Activated CD4-positive, alpha-beta T cell treated with anti-CD3 and anti-CD28 coated beads for 36 hours (primary cell): ENCODE measurements at regions of chr11 and their contacts with region 1.

Region 1: DNA sequence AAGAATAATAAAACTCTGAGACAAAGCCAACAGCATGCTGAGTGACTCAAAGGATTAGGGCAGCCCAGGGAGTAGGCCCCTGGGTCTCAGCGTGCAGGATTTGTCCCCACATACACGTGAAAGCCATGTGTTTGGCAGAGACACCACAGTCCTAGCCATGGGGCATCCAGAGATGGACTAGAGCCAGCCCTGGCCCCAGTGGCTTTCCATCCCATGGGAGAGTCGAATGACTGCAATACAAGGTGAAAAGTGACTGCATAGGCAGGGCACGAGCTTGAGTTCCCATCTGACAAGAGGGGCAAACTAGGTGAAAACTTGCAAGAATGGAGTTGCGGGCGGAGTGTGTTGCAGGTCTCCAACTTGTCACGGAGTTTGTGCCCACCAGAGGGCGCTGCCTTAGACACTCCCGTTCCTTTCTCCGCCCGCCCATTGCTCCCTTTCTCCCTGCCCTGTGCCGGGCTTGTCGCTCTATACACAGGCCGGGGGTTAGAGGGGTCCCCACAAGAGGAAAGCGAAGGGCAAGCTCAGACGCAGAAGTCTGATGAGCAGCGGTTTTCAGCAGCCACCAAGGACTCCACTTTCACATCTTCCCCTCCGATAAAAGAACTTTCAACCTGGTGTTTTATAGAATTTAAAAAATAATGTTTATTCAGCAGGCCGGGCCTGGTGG is 24.2 kb downstream of the TSKU start:
- DNase-seq: peak; percentile 91
- ATAC-seq: peak; percentile 21
- H3K4me3 Mint-ChIP-seq: no peak overlapping the region
- H3K27ac Mint-ChIP-seq: no peak overlapping the region
- H3K4me1 Mint-ChIP-seq: peaks cover 31% of the 10 kb centered on the region
- H3K27me3 Mint-ChIP-seq: peaks cover 12% of the 10 kb centered on the region

Region 2: GRCh38 chr11:76307396-76307795 is 499.9 kb before region 1 on chr11:
- CTCF ChIA-PET with region 1: no interaction called
- POLR2A ChIA-PET with region 1: no interaction called
- intact Hi-C with region 1: no loop called
- DNase-seq: no peak
- ATAC-seq: no peak
- H3K4me3 Mint-ChIP-seq: no peak overlapping the region
- H3K27ac Mint-ChIP-seq: no peak overlapping the region
- H3K4me1 Mint-ChIP-seq: no peaks in the 10 kb centered on the region
- H3K27me3 Mint-ChIP-seq: no peaks in the 10 kb centered on the region

Region 3: DNA sequence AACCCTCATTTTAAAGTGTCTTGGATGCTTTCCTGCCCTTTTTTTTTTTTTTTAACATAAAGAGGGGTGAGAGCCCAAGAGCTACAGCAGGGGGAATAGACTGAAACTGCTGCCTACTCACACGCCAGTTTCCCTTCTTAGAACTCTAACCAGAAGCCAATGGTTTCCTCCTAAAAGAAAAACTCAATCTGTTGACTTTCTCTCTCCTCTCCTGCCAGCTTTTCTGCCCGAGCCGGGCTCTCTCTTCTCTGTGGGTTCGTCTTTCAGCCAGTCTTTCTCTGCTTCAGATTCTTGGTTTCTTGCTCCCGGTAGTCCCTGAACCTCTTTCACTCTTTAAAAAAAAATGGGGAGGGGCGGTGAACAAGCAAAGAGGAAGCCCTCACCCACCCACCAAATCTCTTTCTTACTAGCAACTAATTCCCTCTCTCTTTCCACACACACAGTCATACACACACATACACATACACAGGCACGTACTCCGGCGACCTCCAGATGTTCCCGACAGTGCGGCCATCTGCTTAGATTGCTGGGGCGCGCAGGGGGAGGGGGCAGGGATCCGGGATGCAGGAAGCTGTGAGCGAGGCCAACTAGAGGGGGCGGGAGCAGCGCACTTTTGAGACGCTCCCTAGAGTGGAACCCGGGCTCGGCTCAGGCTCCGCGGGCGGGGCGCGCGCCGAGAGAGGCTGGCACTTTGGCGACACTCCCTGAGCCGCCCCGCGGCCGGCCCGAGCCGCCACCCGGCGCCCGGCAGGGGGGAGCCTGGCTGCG is 24.6 kb before region 1 on chr11:
- CTCF ChIA-PET with region 1: interaction called, 5 read pairs
- POLR2A ChIA-PET with region 1: interaction called, 3 read pairs
- intact Hi-C with region 1: loop called in 1 of 2 experiments (anchors 1 kb)
- DNase-seq: peak; percentile 91
- ATAC-seq: peak; percentile 89
- H3K4me3 Mint-ChIP-seq: peak overlapping the region; percentile 69
- H3K27ac Mint-ChIP-seq: peak overlapping the region; percentile 96
- H3K4me1 Mint-ChIP-seq: peaks cover 15% of the 10 kb centered on the region
- H3K27me3 Mint-ChIP-seq: peaks cover 41% of the 10 kb centered on the region

Region 4: DNA sequence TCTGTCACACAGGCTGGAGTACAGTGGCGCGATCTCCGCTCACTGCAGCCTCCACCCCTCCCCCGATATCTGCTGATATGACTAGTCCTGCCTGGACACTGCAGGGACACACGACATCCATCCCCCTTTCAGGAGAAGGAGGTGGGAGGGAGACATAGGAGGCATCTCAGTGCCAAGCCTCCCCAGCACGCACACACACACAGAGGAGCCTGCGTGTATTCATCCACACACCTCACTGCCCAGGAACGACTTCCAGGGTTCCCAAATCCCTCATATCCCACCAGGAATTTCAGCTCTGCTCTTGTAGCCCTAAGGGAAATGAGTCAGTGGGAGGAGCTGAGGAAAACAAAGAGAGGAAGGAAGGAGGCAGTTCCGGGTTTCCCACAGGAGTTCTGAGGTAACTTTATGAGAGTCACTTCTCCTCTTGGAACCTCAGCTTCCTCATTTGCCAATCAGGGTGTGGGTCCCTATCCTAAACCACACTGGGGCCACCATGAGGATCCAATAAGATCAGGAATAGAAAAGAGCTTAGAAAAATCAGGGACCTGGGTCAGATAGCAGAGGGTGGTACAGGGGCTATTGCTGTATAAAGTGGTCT is 16.2 kb after region 1 on chr11:
- CTCF ChIA-PET with region 1: interaction called, 12 read pairs
- POLR2A ChIA-PET with region 1: no interaction called
- intact Hi-C with region 1: no loop called
- DNase-seq: no peak
- ATAC-seq: no peak
- H3K4me3 Mint-ChIP-seq: no peak overlapping the region
- H3K27ac Mint-ChIP-seq: no peak overlapping the region
- H3K4me1 Mint-ChIP-seq: peaks cover 6% of the 10 kb centered on the region
- H3K27me3 Mint-ChIP-seq: peaks cover 7% of the 10 kb centered on the region

Region 5: DNA sequence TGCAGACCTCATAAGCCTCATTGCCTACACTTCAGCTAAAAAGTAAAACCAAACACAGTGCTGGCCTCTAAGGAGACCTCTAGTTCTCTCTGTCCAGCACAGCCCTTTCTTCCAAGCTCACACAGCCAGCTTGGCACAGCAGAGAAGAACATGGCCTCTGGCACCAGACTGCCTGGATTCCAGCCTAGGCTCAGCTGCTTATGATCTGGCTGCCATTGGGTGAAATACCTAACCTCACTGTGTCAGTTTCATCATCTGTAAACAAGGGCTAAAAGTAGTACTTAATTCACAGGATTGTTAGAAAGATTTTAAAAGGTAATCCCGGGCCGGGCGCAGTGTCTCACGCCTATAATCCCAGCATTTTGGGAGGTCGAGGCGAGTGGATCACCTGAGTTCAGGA is 43.5 kb after region 1 on chr11:
- CTCF ChIA-PET with region 1: no interaction called
- POLR2A ChIA-PET with region 1: no interaction called
- intact Hi-C with region 1: no loop called
- DNase-seq: no peak
- ATAC-seq: no peak
- H3K4me3 Mint-ChIP-seq: no peak overlapping the region
- H3K27ac Mint-ChIP-seq: no peak overlapping the region
- H3K4me1 Mint-ChIP-seq: peaks cover 5% of the 10 kb centered on the region
- H3K27me3 Mint-ChIP-seq: peaks cover 7% of the 10 kb centered on the region